Dorsolateral prefrontal cortex (tissue), 120 donors: ENCODE measurements at regions of chr10 and their contacts with region 1.

Region 1: DNA sequence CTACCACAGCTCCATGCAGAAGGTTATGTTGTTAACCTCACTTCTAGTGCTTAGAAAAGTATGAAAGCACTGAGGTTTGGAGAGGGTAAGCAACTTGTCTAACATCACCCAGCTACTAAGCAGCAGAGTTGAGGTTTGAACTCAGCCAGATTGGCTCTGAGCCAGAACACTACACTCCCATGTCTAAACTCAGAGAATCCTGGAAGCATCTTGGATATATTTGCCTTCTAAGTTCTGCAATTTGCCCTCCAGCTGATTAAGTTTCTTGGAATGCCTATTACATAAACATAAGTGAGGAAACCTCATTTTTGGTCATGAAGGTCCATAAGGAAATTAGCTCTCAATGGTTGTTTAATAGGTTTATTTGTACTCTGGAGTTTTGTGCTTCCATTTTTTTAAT is 78.1 kb upstream of the PHYHIPL start:
- DNase-seq: no peak
- H3K4me3 ChIP-seq: no peak overlapping the region
- H3K27ac ChIP-seq: peak overlapping the region in 47 of 59 donors; percentile 17 to 95 (median 72)
- H3K27me3 ChIP-seq: no peaks in the 10 kb centered on the region
- CTCF ChIP-seq: no peak

Region 2: GRCh38 chr10:58967551-58968388 is 130.6 kb before region 1 on chr10:
- intact Hi-C with region 1: loop called in 1 of 2 experiments (anchors 10 kb)
- DNase-seq: peak; percentile 58 to 88 (median 74)
- H3K4me3 ChIP-seq: peak overlapping the region in 55 of 59 donors; percentile 5 to 61 (median 38)
- H3K27ac ChIP-seq: peak overlapping the region; percentile 79 to 99 (median 96)
- H3K27me3 ChIP-seq: no peaks in the 10 kb centered on the region
- CTCF ChIP-seq: peak in 2 of 56 donors; percentile 10 to 13

Region 3: DNA sequence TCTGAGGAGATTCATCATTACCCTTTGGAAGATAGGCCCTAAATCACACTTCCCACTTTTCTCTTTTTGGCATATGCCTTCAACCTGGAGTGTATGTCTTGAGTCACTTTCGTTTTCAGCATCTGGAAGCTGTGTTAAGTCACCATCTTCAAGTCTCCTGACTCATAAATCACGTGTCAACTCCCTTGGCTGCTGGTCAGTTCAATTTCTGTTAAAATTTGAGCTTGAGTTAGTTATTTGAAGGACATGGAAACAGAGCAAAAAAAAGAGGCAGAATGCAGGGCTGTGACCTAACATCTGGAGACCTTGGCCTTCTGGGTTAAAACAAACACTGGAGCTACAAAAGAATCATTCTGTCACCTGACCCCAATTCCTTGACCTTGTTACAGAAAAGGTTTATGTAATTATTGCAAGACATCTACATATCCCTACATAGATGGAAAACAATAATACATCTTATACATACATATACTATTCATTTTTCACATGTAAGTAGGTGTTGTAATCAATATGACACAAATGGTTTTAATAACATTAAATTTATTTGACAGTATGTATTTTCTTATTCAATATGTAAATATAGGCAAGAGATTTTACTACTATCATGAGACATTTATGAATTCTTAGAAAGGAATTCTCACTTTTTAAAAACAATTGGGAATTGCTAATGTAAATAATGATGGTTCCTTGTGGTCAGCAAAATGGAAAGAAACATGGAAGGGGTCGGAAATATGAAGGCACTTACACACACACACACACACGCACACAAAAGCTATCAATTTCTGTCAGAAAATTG is 91.7 kb before region 1 on chr10:
- intact Hi-C with region 1: loop called (anchors 5 to 10 kb)
- DNase-seq: no peak
- H3K4me3 ChIP-seq: peak overlapping the region in 3 of 59 donors; percentile 5 to 22 (median 10)
- H3K27ac ChIP-seq: peak overlapping the region in 58 of 59 donors; percentile 28 to 100 (median 97)
- H3K27me3 ChIP-seq: no peaks in the 10 kb centered on the region
- CTCF ChIP-seq: no peak

Region 4: GRCh38 chr10:59012839-59013238 is 85.5 kb before region 1 on chr10:
- intact Hi-C with region 1: loop called (anchors 5 to 10 kb)
- DNase-seq: no peak
- H3K4me3 ChIP-seq: no peak overlapping the region
- H3K27ac ChIP-seq: peak overlapping the region in 45 of 59 donors; percentile 1 to 100 (median 69)
- H3K27me3 ChIP-seq: no peaks in the 10 kb centered on the region
- CTCF ChIP-seq: no peak